BJ (cell line): ENCODE measurements at regions of chr5 and their contacts with region 1.

Region 1: DNA sequence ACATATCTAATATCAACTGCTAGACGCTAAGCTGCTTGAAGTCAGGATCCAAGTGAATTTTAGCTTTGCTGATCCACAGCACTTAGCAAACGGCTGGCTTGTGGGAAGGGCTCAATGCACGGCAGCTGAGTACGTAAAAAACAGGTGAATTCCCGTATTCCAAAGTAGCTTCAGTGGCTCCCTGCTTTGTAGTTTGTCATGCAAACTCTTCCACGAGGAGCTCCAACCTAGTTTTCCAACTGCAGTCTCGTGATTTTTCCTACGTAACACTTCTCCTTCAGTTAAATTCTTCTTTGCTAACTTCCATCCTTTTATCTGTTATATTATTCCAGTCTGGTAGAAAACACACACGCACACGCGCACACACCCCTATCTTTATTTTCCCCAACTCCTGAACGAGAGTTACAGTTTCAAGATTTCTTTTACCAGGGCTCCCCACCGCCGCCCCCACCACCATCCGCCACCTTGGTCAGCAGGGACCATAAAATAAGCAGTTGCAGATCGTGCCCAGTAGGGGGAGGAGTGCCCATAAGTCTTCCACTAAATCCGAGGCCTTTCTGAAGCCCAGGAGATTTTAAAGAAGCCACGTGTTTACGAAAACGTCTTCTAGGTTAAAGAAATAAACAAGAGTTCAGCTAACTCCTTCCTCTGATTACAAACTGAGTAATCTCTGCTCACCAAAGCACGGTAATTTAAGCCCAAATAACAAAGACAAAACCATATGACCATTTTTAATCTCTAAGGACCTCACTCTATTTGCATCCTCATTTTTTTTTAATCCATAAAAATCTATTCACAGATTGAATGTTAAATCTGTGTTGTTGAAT is 34.8 kb upstream of the TRIO start:
- DNase-seq: no peak
- H3K4me3 ChIP-seq: no peak overlapping the region
- H3K27me3 ChIP-seq: no peaks in the 10 kb centered on the region
- CTCF ChIP-seq: peak; percentile 82

Region 2: DNA sequence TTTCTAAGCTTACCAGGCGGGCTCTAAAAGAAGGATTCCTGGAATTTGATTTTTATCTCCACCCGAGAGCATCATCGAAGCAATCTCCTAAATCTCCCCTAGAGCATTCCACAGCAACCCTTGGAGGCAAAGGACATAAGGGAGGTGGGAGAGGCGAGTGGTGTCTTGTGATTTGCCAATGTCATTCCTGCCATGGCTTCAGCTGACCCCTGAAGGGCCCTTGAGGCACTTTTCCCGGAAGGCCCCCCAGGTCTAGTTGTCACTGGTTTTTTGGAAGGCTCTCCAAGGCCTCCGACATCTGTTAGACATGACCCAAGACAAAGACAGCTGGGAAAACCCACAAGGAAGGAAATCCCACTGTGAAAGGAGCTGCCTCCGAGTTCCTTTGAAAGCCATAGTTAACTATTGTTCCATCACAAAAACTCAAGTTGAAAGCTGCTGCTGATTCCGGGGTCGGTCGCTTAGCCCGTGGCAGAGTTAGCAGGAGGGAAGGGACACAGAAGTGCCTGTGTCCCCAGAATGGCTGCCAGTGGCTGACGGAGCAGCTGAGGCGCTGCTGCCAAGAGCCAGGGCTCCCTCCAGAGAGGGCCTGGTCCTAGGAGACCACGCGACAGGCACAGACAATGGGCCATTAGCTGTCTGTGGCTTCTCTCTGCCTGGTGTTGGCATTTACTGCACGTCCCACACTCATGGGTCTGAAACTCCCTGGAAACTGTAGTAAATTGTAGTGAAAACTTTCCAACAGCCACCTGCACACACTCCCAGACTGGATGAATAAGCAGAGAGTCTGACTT is 10.3 kb after region 1 on chr5:
- CTCF ChIA-PET with region 1: interaction called, 10 read pairs
- POLR2A ChIA-PET with region 1: no interaction called
- DNase-seq: no peak
- H3K4me3 ChIP-seq: no peak overlapping the region
- H3K27me3 ChIP-seq: no peaks in the 10 kb centered on the region
- CTCF ChIP-seq: no peak

Region 3: GRCh38 chr5:14142827-14143548 is 34.6 kb after region 1 on chr5 and contains the start of gene TRIO:
- CTCF ChIA-PET with region 1: interaction called, 10 read pairs
- POLR2A ChIA-PET with region 1: no interaction called
- DNase-seq: peak; percentile 50
- H3K4me3 ChIP-seq: peak within 1 kb of the TSS; percentile 96
- H3K27me3 ChIP-seq: no peaks in the 10 kb centered on the region
- CTCF ChIP-seq: peak; percentile 61
- polyA plus RNA-seq, gene TRIO: 124 and 176 TPM in 2 replicates

Region 4: GRCh38 chr5:14270209-14270702 is 161.9 kb after region 1 on chr5:
- CTCF ChIA-PET with region 1: interaction called, 17 read pairs
- POLR2A ChIA-PET with region 1: interaction called, 17 read pairs
- DNase-seq: no peak
- H3K4me3 ChIP-seq: no peak overlapping the region
- H3K27me3 ChIP-seq: no peaks in the 10 kb centered on the region
- CTCF ChIP-seq: peak; percentile 82

Region 5: GRCh38 chr5:14424011-14424685 is 315.8 kb after region 1 on chr5:
- CTCF ChIA-PET with region 1: no interaction called
- POLR2A ChIA-PET with region 1: interaction called, 11 read pairs
- DNase-seq: no peak
- H3K4me3 ChIP-seq: no peak overlapping the region
- H3K27me3 ChIP-seq: no peaks in the 10 kb centered on the region
- CTCF ChIP-seq: no peak